Naive thymus-derived CD4-positive, alpha-beta T cell (primary cell): ENCODE measurements at regions of chr4 and their contacts with region 1.

Region 1: GRCh38 chr4:166165829-166166420 is 292.9 kb downstream of the TLL1 start:
- DNase-seq: peak in 6 of 9 donors; percentile 13 to 44 (median 24)
- ATAC-seq: peak; percentile 57
- H3K4me3 ChIP-seq: no peak overlapping the region
- H3K4me3 Mint-ChIP-seq: no peak overlapping the region
- H3K27ac ChIP-seq: no peak overlapping the region
- H3K27ac Mint-ChIP-seq: no peak overlapping the region
- H3K4me1 ChIP-seq: no peaks in the 10 kb centered on the region
- H3K4me1 Mint-ChIP-seq: peaks cover 0 to 4% (median 0%) of the 10 kb centered on the region in 7 donors
- H3K27me3 ChIP-seq: no peaks in the 10 kb centered on the region
- H3K27me3 Mint-ChIP-seq: no peaks in the 10 kb centered on the region

Region 2: DNA sequence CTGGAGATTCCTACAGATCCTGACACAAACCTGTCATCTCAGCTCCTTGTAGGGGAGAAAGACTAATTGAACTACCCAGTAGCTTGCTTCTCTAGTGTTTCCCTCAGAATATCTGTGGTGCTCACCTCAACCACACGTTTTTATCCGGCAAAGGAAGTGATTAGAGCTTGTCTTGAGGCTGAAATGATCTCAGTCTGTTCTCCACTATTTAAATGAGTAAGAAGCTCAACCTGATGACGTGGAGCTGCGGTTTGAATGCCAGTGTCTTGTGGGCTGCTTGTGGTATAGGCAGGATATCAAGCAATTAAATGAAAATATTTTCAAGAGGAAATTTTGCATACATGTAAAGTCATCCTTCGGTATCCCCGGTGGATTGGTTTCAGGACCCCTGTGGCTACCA is 22.7 kb before region 1 on chr4:
- CTCF ChIA-PET with region 1: no interaction called
- POLR2A ChIA-PET with region 1: no interaction called
- intact Hi-C with region 1: no loop called
- DNase-seq: no peak
- ATAC-seq: no peak
- H3K4me3 ChIP-seq: no peak overlapping the region
- H3K4me3 Mint-ChIP-seq: no peak overlapping the region
- H3K27ac ChIP-seq: no peak overlapping the region
- H3K27ac Mint-ChIP-seq: no peak overlapping the region
- H3K4me1 ChIP-seq: no peaks in the 10 kb centered on the region
- H3K4me1 Mint-ChIP-seq: no peaks in the 10 kb centered on the region
- H3K27me3 ChIP-seq: no peaks in the 10 kb centered on the region
- H3K27me3 Mint-ChIP-seq: no peaks in the 10 kb centered on the region

Region 3: DNA sequence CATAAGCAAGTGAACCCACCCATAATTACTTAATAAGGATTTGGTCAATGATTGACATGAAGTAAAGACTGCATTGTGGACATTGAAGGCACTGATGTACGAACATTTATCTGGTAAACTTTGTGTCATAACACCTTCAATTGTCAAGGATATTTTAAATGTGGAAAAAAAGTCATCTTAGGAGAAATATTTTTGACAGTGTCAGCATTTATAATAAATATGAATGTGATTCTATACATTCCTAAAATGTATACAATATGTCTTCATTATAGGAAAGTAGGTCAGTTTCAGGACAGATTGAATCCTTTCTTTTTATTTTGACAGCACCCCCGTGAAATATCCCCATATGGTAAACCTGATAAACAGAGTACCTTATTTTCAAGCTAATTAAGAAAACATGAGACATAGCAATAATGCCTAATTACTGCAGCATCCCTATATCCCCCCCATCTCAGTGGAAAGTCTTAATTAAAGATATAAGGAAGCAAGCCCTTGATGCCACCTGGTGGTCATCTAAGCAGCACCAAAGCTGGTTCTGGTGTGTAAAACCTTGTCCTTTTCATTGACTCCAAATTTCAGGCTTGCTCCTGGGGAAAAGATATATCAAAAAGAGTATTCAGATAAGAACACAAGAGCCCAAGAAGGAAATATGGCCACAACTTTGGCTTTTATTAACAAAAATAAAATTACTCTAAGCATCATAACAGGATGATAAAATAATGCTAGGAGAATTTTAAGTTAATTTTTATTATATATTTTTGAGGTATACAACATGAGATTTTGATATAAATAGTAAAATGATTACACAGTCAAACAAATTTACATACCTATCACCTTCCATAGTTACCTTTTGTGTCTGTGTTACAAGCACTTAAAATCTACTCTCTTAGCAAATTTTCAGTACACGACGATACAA is 86.8 kb after region 1 on chr4:
- CTCF ChIA-PET with region 1: no interaction called
- POLR2A ChIA-PET with region 1: no interaction called
- intact Hi-C with region 1: loop called in 1 of 2 experiments (anchors 1 kb)
- DNase-seq: no peak
- ATAC-seq: no peak
- H3K4me3 ChIP-seq: no peak overlapping the region
- H3K4me3 Mint-ChIP-seq: no peak overlapping the region
- H3K27ac ChIP-seq: no peak overlapping the region
- H3K27ac Mint-ChIP-seq: no peak overlapping the region
- H3K4me1 ChIP-seq: no peaks in the 10 kb centered on the region
- H3K4me1 Mint-ChIP-seq: no peaks in the 10 kb centered on the region
- H3K27me3 ChIP-seq: no peaks in the 10 kb centered on the region
- H3K27me3 Mint-ChIP-seq: no peaks in the 10 kb centered on the region

Region 4: GRCh38 chr4:167014944-167015343 is 849.0 kb after region 1 on chr4:
- CTCF ChIA-PET with region 1: no interaction called
- POLR2A ChIA-PET with region 1: no interaction called
- intact Hi-C with region 1: loop called in 1 of 2 experiments (anchors 5 kb)
- DNase-seq: no peak
- ATAC-seq: no peak
- H3K4me3 ChIP-seq: no peak overlapping the region
- H3K4me3 Mint-ChIP-seq: no peak overlapping the region
- H3K27ac ChIP-seq: no peak overlapping the region
- H3K27ac Mint-ChIP-seq: no peak overlapping the region
- H3K4me1 ChIP-seq: no peaks in the 10 kb centered on the region
- H3K4me1 Mint-ChIP-seq: no peaks in the 10 kb centered on the region
- H3K27me3 ChIP-seq: no peaks in the 10 kb centered on the region
- H3K27me3 Mint-ChIP-seq: no peaks in the 10 kb centered on the region

Region 5: DNA sequence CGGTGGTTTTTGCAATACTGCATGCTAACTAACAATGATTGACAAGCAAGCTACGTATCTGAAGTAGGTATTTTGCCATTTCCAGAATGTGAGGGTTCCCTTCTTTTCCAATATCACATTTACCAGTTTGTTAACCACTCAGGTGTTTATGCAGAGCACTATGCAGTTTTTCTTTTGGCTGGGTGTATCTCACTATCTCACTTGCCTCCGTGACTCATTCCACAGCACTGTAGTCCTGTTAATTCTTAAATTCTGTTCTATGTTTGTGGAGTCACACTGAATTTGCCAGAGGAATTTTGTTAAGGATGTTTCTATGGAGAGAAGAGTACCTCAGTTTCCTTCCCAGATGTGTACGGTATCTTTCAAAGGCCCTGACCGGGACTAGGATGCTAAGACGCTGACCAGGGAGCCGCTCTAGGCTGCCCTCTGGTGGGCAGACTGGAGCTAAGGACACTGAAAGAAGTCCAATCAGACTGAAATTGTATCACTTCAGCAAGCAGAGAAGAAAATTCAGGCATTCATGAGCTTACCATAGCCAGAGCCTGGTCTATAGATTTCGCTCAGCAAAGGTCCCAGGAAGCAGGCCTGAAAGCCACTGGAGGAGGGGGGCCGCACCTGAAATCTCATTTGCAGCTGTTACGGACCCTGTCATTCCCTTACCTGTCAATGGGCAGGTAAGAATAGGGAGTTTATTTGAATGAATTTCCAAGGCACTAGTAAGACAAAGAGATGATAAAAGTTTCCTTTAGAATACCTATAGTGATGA is 1456.7 kb after region 1 on chr4:
- CTCF ChIA-PET with region 1: no interaction called
- POLR2A ChIA-PET with region 1: no interaction called
- intact Hi-C with region 1: loop called in 1 of 2 experiments (anchors 5 kb)
- DNase-seq: peak in 2 of 9 donors; percentile 4 to 48
- ATAC-seq: no peak
- H3K4me3 ChIP-seq: no peak overlapping the region
- H3K4me3 Mint-ChIP-seq: no peak overlapping the region
- H3K27ac ChIP-seq: no peak overlapping the region
- H3K27ac Mint-ChIP-seq: no peak overlapping the region
- H3K4me1 ChIP-seq: no peaks in the 10 kb centered on the region
- H3K4me1 Mint-ChIP-seq: no peaks in the 10 kb centered on the region
- H3K27me3 ChIP-seq: no peaks in the 10 kb centered on the region
- H3K27me3 Mint-ChIP-seq: no peaks in the 10 kb centered on the region

Region 6: DNA sequence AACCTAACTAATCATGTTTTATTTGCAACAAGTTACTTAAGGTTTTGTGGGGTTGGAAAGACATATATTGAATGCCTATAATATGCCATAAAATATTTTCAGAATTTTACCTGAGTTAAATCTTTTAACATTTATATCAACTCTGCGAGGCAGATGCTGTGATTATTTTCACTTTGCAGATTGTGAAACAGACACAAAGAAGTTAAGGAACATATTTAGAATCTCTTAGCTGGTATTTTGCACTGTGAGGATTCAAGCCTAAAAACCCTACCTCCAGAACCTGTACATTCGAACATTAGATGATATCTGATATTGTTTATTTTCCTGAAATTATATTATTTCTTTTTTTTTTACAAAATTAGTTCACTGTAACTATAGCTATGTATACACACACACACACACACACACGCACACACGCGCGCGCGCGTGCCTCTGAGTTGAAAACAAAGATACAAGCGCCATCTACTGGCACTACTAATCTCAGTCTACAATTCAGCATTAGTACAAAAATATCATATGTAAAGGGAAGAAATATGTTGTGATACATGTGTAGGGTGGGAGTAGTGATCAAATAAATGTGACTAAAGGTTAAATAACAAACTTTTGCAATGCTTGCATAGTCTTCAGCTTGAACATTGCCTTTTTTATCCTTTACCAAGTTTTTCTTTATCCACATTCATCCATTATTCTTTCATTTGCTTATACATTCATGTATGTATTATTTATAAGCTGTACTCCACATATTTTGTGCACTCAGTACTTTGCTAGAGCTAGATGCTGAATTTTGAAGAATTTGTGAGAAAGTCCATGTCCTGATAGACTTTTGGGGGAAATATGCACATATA is 1987.9 kb after region 1 on chr4:
- CTCF ChIA-PET with region 1: no interaction called
- POLR2A ChIA-PET with region 1: no interaction called
- intact Hi-C with region 1: loop called in 1 of 2 experiments (anchors 2 kb)
- DNase-seq: peak in 8 of 9 donors; percentile 23 to 72 (median 58)
- ATAC-seq: peak; percentile 82
- H3K4me3 ChIP-seq: no peak overlapping the region
- H3K4me3 Mint-ChIP-seq: peak overlapping the region in 7 of 10 donors; percentile 17 to 62 (median 48)
- H3K27ac ChIP-seq: no peak overlapping the region
- H3K27ac Mint-ChIP-seq: no peak overlapping the region
- H3K4me1 ChIP-seq: no peaks in the 10 kb centered on the region
- H3K4me1 Mint-ChIP-seq: peaks cover 0 to 9% (median 5%) of the 10 kb centered on the region in 7 donors
- H3K27me3 ChIP-seq: no peaks in the 10 kb centered on the region
- H3K27me3 Mint-ChIP-seq: peaks cover 0 to 6% (median 4%) of the 10 kb centered on the region in 5 donors